CD4-positive, alpha-beta T cell (primary cell): ENCODE measurements at regions of chr5 and their contacts with region 1.

Region 1: GRCh38 chr5:80541392-80541791 is 28.7 kb downstream of the ANKRD34B start:
- DNase-seq: no peak
- ATAC-seq: no peak
- H3K4me3 ChIP-seq: no peak overlapping the region
- H3K4me3 Mint-ChIP-seq: no peak overlapping the region
- H3K27ac ChIP-seq: no peak overlapping the region
- H3K27ac Mint-ChIP-seq: no peak overlapping the region
- H3K4me1 ChIP-seq: no peaks in the 10 kb centered on the region
- H3K4me1 Mint-ChIP-seq: no peaks in the 10 kb centered on the region
- H3K27me3 ChIP-seq: no peaks in the 10 kb centered on the region
- H3K27me3 Mint-ChIP-seq: no peaks in the 10 kb centered on the region
- CTCF ChIP-seq: no peak

Region 2: DNA sequence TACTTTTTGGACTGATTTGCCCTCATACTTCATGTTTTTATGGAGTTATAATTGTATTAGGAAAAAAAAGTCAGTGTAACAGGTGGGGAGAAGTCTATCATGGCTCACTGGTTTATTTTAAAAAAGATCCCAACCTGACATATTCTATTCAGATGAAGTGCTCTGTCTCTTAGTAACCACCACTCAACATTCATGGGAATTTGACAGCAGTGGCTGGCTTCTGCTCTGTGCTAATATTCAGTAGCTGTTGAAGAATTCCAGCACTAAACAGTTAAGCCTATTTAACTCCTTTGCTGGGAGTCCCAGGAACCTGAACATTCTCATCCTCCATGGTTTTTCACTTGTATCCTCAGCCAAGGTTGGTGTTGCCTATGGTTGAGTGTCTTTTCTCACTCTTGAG is 828.7 kb before region 1 on chr5:
- CTCF ChIA-PET with region 1: no interaction called
- POLR2A ChIA-PET with region 1: no interaction called
- intact Hi-C with region 1: no loop called
- DNase-seq: no peak
- ATAC-seq: no peak
- H3K4me3 ChIP-seq: no peak overlapping the region
- H3K4me3 Mint-ChIP-seq: no peak overlapping the region
- H3K27ac ChIP-seq: no peak overlapping the region
- H3K27ac Mint-ChIP-seq: no peak overlapping the region
- H3K4me1 ChIP-seq: no peaks in the 10 kb centered on the region
- H3K4me1 Mint-ChIP-seq: no peaks in the 10 kb centered on the region
- H3K27me3 ChIP-seq: no peaks in the 10 kb centered on the region
- H3K27me3 Mint-ChIP-seq: no peaks in the 10 kb centered on the region
- CTCF ChIP-seq: no peak

Region 3: GRCh38 chr5:80487829-80488721 is 53.3 kb before region 1 on chr5 and contains the start of gene FAM151B:
- CTCF ChIA-PET with region 1: no interaction called
- POLR2A ChIA-PET with region 1: no interaction called
- intact Hi-C with region 1: loop called in 1 of 2 experiments (anchors 10 kb)
- DNase-seq: peak; percentile 45 to 91 (median 74)
- ATAC-seq: peak; percentile 88
- H3K4me3 ChIP-seq: peak within 1 kb of the TSS; percentile 58
- H3K4me3 Mint-ChIP-seq: peak within 1 kb of the TSS; percentile 88
- H3K27ac ChIP-seq: no peak within 1 kb of the TSS
- H3K27ac Mint-ChIP-seq: peak within 1 kb of the TSS; percentile 87
- H3K4me1 ChIP-seq: peaks cover 16% of the 10 kb centered on the region
- H3K4me1 Mint-ChIP-seq: peaks cover 21% of the 10 kb centered on the region
- H3K27me3 ChIP-seq: no peaks in the 10 kb centered on the region
- H3K27me3 Mint-ChIP-seq: no peaks in the 10 kb centered on the region
- CTCF ChIP-seq: no peak
- total RNA-seq, gene FAM151B: 0.33 to 0.61 TPM

Region 4: DNA sequence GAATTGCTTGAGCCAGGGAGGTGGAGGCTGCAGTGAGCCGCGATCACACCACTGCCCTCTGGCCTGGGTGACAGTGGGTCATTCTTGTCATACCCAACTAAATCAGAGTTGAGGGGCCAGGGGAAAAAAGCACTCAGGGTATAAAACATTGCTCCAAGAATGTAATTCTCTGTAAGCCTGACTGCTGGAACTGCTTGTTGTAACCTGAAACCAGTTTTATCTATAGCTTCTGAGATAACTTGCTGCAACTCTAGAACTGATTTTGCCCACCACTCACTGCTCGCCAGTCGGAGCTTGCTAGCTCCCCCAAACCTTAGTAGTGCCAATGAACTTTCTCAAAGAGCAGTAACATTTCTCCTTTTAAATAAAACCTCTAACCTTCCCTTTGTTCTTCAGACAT is 103.5 kb after region 1 on chr5:
- CTCF ChIA-PET with region 1: no interaction called
- POLR2A ChIA-PET with region 1: no interaction called
- intact Hi-C with region 1: no loop called
- DNase-seq: no peak
- ATAC-seq: no peak
- H3K4me3 ChIP-seq: no peak overlapping the region
- H3K4me3 Mint-ChIP-seq: no peak overlapping the region
- H3K27ac ChIP-seq: no peak overlapping the region
- H3K27ac Mint-ChIP-seq: no peak overlapping the region
- H3K4me1 ChIP-seq: no peaks in the 10 kb centered on the region
- H3K4me1 Mint-ChIP-seq: no peaks in the 10 kb centered on the region
- H3K27me3 ChIP-seq: no peaks in the 10 kb centered on the region
- H3K27me3 Mint-ChIP-seq: no peaks in the 10 kb centered on the region
- CTCF ChIP-seq: no peak